Activated CD4-positive, alpha-beta memory T cell treated with anti-CD3 and anti-CD28 coated beads, Interleukin-2, amount 10 ng/mL, durations not matched to agents 7 days and 5 days (primary cell): ENCODE measurements at regions of chr9 and their contacts with region 1.

Region 1: DNA sequence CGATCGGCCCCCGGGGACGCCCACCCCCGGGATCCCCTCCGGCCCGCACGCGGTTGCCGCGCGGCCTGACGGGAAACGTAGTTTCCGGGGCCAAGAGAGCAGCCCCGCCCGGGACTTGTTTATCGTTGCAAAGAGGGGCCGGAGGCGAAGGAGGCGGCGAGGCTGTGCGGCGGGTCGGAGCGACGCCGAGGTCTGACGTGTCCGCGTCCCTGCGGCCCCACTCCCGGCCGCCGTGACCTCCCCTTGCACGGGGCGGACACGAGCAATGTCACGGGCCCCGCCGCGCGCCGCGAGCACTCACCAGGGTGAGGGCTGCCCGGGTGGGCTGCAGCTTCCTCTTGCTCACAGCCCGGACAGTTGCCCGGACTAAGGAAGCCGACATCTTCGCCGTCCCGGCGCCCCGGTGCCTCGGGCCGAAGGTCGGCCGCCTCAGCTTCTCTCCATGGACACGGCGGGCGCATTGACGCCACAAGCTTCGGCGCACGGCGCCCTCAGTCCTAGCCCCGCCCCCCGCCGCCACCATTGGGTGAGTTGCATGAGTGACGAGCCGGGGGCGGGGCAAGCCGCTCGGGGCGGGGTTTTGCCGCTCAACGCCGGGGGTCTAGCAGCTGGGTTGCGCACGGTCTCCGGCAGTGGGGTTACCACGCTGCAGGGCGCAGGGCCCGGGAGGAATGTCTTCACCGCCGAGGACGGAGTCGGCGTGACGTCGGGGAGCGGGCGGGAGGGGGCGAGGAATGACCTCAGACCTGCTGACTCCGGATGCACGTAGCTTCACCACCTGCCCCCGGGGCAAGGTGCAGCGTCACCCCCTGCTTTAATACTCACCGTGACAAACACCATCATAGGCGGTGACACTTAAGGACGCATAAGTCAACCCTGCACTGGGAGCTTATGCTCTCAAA is at the start of gene ISCA1:
- DNase-seq: peak; percentile 96
- H3K4me3 Mint-ChIP-seq: peak within 1 kb of the TSS; percentile 84
- H3K27ac Mint-ChIP-seq: peak within 1 kb of the TSS; percentile 94
- H3K4me1 Mint-ChIP-seq: peaks cover 43% of the 10 kb centered on the region
- H3K27me3 Mint-ChIP-seq: no peaks in the 10 kb centered on the region
- total RNA-seq, gene ISCA1: 23.0 to 24.0 TPM

Region 2: GRCh38 chr9:86303316-86303975 is 21.1 kb after region 1 on chr9:
- CTCF ChIA-PET with region 1: no interaction called
- POLR2A ChIA-PET with region 1: interaction called, 27 read pairs
- DNase-seq: peak; percentile 62
- H3K4me3 Mint-ChIP-seq: peak overlapping the region; percentile 2
- H3K27ac Mint-ChIP-seq: peak overlapping the region; percentile 90
- H3K4me1 Mint-ChIP-seq: peaks cover 50% of the 10 kb centered on the region
- H3K27me3 Mint-ChIP-seq: no peaks in the 10 kb centered on the region

Region 3: GRCh38 chr9:86337469-86338108 is 55.3 kb after region 1 on chr9:
- CTCF ChIA-PET with region 1: no interaction called
- POLR2A ChIA-PET with region 1: interaction called, 10 read pairs
- DNase-seq: no peak
- H3K4me3 Mint-ChIP-seq: peak overlapping the region; percentile 78
- H3K27ac Mint-ChIP-seq: peak overlapping the region; percentile 87
- H3K4me1 Mint-ChIP-seq: peaks cover 51% of the 10 kb centered on the region
- H3K27me3 Mint-ChIP-seq: no peaks in the 10 kb centered on the region

Region 4: DNA sequence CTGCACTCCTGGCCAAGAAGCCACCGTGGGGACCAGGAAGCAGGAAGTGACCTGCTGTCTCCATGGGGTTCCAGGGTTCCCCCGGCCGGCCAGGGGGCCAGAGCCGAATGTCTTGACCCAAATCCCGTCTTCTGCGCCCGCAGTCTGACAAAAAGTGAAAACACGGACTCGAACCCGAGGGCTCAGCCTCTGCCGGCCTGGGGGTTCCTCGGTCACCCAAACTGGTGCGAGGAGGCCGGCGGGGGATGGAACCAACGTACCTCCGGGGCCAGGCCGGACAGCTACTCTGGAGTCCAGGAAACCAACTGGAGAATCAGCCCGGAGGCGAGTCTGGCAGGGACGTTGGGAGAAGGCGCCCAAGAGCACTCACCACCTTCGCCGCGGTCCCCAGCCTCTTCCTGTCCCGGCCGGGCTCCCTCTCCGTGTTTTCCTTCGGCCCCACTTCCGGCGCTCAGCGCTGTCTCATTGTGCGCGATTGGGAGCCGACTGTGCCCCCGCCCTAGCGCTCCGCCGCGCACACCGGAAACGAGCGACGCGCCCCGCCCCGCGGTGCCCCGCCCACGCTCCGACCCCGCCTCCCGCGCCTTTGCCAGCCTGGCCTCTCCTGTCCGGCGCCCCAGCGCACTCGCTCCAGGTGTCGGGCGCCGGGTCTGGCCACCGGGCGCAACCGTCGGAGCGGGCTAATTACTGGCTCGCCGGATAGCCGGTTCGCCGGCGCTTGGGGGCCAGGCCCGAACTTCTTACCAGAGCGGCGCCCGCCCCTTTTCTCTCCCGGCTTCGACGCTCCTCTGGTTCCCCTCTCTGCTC is 71.9 kb after region 1 on chr9 and contains the start of gene TUT7:
- CTCF ChIA-PET with region 1: no interaction called
- POLR2A ChIA-PET with region 1: interaction called, 13 read pairs
- DNase-seq: peak; percentile 95
- H3K4me3 Mint-ChIP-seq: peak within 1 kb of the TSS; percentile 96
- H3K27ac Mint-ChIP-seq: peak within 1 kb of the TSS; percentile 98
- H3K4me1 Mint-ChIP-seq: peaks cover 40% of the 10 kb centered on the region
- H3K27me3 Mint-ChIP-seq: peaks cover 6% of the 10 kb centered on the region
- total RNA-seq, gene TUT7: 59.3 to 63.1 TPM

Region 5: DNA sequence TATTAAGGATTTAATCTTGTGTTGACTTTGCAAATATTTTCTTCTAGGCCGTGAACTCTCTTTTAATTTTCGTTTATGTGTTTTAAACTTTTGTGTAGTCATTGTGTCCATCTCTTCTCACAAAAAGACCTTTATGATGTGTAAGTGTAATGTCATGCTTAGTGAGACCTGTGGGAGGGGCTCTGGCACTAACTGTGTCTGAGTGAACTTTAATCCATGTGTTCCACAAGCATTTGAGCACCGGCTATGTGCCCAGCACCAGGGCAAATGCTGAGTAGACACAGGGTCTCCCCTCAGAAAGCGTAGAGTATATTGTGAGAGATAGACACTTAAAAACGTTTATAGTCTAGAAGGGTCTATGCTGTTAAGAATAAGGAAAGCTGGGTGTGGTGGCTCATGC is 344.5 kb after region 1 on chr9:
- CTCF ChIA-PET with region 1: no interaction called
- POLR2A ChIA-PET with region 1: no interaction called
- DNase-seq: no peak
- H3K4me3 Mint-ChIP-seq: no peak overlapping the region
- H3K27ac Mint-ChIP-seq: no peak overlapping the region
- H3K4me1 Mint-ChIP-seq: no peaks in the 10 kb centered on the region
- H3K27me3 Mint-ChIP-seq: no peaks in the 10 kb centered on the region